ENCODE measurements at regions of chr17 and their contacts with region 1.

Region 1: DNA sequence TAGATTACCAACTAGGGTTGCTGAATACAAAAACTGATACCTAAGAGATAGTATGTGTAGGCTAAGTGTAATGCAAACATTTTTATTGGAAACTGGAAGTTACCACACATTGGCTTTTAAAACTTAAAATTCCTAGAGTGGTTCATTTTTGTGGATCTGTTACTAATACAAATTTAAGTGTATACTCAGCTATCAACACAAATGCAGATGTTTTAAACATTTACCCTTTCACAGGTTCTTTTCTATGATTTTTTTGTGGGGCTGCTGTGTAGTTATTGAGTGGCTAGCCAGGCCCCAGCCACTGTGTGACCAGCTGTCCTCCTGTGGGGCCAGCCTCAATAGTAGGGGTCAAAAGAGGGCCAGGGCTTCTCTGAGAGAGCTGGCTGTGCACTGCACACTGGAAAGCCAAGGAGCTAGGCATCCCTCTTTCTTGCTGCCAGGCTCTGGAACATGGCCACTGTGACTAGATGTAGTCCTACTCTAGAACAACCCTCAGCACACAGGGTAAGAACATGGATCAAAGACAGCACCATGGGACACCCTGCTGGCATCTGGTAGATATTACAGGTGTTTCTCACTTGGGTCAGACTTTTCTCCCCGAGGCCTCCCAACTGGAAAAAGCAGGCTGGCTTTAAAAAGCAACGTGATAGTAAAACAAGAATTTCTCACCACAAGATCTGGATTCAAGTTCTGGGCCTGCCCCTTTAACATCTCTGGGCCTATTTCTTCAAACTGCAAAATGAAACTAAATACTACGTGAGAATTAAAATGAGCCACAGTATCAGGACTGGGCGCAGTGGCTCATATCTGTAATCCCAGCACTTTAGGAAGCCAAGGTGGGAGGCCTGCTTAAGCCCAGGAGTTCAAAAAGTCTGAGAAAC is 7.3 kb upstream of the VEZF1 start:
- DNase-seq: peak; percentile 29 to 76
- ATAC-seq: peak; percentile 88 to 92 (median 90)
- H3K4me3 ChIP-seq: no peak overlapping the region
- H3K27ac ChIP-seq: peak overlapping the region in 8 of 10 donors; percentile 14 to 59 (median 35)
- H3K4me1 ChIP-seq: peaks cover 3 to 64% (median 36%) of the 10 kb centered on the region in 9 donors
- H3K27me3 ChIP-seq: no peaks in the 10 kb centered on the region
- CTCF ChIP-seq: peak; percentile 37 to 75 (median 70)

Region 2: GRCh38 chr17:57114085-57114673 is 881.1 kb before region 1 on chr17:
- intact Hi-C with region 1: loop called in 1 of 10 experiments (anchors 10 kb)
- DNase-seq: peak; percentile 31 to 52
- ATAC-seq: peak in 4 of 8 donors; percentile 16 to 32 (median 22)
- H3K4me3 ChIP-seq: no peak overlapping the region
- H3K27ac ChIP-seq: peak overlapping the region in 7 of 10 donors; percentile 24 to 86 (median 56)
- H3K4me1 ChIP-seq: peaks cover 23 to 70% (median 58%) of the 10 kb centered on the region in 9 donors
- H3K27me3 ChIP-seq: no peaks in the 10 kb centered on the region
- CTCF ChIP-seq: peak; percentile 82 to 91 (median 87)

Region 3: GRCh38 chr17:57121338-57122042 is 873.8 kb before region 1 on chr17:
- intact Hi-C with region 1: loop called in 2 of 10 experiments (anchors 10 kb)
- DNase-seq: peak in 1 of 2 donors; percentile 29
- ATAC-seq: peak in 5 of 8 donors; percentile 40 to 59 (median 52)
- H3K4me3 ChIP-seq: no peak overlapping the region
- H3K27ac ChIP-seq: peak overlapping the region in 1 of 10 donors; percentile 4
- H3K4me1 ChIP-seq: peaks cover 0 to 14% (median 0%) of the 10 kb centered on the region in 9 donors
- H3K27me3 ChIP-seq: no peaks in the 10 kb centered on the region
- CTCF ChIP-seq: peak in 8 of 9 donors; percentile 17 to 60 (median 48)

Region 4: GRCh38 chr17:57855391-57856035 is 139.8 kb before region 1 on chr17:
- intact Hi-C with region 1: loop called (anchors 1 to 5 kb)
- DNase-seq: no peak
- ATAC-seq: no peak
- H3K4me3 ChIP-seq: no peak overlapping the region
- H3K27ac ChIP-seq: peak overlapping the region in 5 of 10 donors; percentile 12 to 91 (median 47)
- H3K4me1 ChIP-seq: peaks cover 10 to 74% (median 33%) of the 10 kb centered on the region in 9 donors
- H3K27me3 ChIP-seq: no peaks in the 10 kb centered on the region
- CTCF ChIP-seq: no peak

Region 5: GRCh38 chr17:57868007-57868909 is 127.1 kb before region 1 on chr17:
- intact Hi-C with region 1: loop called in 2 of 10 experiments (anchors 5 kb)
- DNase-seq: peak; percentile 73 to 79
- ATAC-seq: peak; percentile 67 to 89 (median 84)
- H3K4me3 ChIP-seq: no peak overlapping the region
- H3K27ac ChIP-seq: peak overlapping the region; percentile 28 to 83 (median 71)
- H3K4me1 ChIP-seq: peaks cover 15 to 50% (median 36%) of the 10 kb centered on the region in 9 donors
- H3K27me3 ChIP-seq: no peaks in the 10 kb centered on the region
- CTCF ChIP-seq: peak in 8 of 9 donors; percentile 24 to 58 (median 42)

Region 6: GRCh38 chr17:57875309-57876115 is 119.8 kb before region 1 on chr17:
- intact Hi-C with region 1: loop called in 2 of 10 experiments (anchors 5 kb)
- DNase-seq: peak; percentile 80 to 82
- ATAC-seq: peak; percentile 84 to 92 (median 88)
- H3K4me3 ChIP-seq: peak overlapping the region in 5 of 10 donors; percentile 25 to 34 (median 27)
- H3K27ac ChIP-seq: peak overlapping the region; percentile 44 to 94 (median 87)
- H3K4me1 ChIP-seq: peaks cover 36 to 86% (median 67%) of the 10 kb centered on the region in 9 donors
- H3K27me3 ChIP-seq: no peaks in the 10 kb centered on the region
- CTCF ChIP-seq: peak; percentile 5 to 58 (median 43)

Measured in heart right ventricle (tissue), 16 donors.